Left colon (tissue), 2 donors: ENCODE measurements at regions of chr11 and their contacts with region 1.

Region 1: DNA sequence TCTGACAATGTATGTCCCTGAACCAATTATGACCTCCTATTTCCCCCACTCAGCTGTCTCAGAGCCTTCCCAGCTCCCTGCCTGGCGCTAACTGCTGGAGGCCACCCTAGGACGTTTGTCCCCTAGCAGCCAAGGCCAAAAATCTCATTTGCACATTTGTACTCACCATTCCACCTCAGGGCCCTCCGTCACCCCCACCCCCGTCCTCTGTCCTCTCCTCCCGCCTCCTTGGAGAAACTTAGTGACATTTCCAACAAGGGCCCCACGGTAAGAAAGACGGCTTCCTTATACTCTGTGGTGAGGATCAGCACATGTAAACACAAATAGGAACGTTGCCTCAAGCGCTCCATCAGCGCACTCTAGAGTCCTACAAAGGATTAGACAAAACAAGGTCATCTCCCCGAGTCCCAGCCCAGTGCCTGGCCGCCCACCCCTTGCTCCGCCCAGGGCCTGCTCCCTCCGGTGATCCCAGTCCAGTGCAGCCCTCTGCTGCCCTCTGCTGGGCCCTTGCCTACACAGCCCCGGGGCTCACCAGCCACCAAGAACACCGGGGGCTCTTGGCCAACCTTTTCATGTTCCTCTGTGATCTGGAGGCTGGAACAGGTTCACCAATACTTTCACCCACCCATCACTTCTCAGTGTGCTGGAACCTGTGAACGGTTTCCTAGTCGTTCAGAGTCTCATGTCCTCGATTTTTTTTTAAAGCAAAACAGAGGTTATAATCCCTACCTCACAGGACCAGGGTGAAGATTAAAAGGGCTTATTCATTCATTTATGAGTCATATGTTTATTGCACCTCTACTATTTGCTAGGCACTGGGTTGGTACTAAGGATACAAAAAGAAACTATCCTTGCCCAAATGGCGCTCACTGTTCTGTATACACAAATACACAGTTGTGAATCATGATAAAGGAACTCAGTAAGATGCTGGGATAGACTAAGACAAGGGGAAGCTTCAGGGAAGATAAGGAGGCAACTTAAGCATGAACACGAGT is 15.3 kb upstream of the CTR9 start:
- DNase-seq: peak; percentile 92 to 95
- ATAC-seq: peak; percentile 98

Region 2: DNA sequence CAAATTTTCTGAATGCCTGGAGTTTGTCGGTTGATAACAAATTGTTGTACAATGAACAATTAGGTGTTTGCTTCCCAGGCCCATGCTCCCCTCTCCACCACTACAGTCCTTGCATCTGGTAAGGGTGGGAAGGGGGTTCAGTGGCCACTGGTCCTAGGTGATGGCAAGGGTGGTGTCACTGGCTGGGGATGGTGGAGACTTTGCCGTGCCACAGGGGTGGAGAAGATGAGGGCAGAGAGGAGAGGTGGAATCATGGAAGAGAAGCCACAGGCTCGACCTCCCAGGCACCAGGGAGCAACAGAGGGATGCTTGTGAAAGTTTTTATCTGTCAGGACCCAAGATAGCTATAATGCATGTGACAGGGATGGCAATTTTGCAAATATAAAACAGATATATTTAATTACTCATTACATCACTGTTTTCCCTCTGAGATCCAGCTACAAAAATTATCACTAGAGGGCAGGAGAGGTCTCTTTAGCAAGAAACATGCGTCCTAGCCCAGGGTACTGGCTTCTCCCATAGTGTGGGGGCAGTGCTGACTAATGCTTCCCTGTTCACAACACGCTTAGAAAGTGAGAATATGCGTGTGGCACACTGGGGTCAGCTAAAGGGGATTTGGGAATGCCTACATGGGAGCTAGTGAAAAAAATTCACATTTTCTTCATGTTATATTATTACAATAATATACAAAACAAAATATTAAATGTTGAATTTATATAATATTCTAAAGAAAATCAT is 329.8 kb before region 1 on chr11:
- intact Hi-C with region 1: loop called (anchors 5 to 10 kb)
- DNase-seq: peak; percentile 37 to 70
- ATAC-seq: peak; percentile 91

Region 3: GRCh38 chr11:10413268-10413667 is 322.5 kb before region 1 on chr11:
- intact Hi-C with region 1: loop called (anchors 5 to 10 kb)
- DNase-seq: peak; percentile 39 to 59
- ATAC-seq: peak; percentile 95

Region 4: GRCh38 chr11:10688401-10688800 is 47.4 kb before region 1 on chr11:
- intact Hi-C with region 1: no loop called
- DNase-seq: no peak
- ATAC-seq: no peak

Region 5: DNA sequence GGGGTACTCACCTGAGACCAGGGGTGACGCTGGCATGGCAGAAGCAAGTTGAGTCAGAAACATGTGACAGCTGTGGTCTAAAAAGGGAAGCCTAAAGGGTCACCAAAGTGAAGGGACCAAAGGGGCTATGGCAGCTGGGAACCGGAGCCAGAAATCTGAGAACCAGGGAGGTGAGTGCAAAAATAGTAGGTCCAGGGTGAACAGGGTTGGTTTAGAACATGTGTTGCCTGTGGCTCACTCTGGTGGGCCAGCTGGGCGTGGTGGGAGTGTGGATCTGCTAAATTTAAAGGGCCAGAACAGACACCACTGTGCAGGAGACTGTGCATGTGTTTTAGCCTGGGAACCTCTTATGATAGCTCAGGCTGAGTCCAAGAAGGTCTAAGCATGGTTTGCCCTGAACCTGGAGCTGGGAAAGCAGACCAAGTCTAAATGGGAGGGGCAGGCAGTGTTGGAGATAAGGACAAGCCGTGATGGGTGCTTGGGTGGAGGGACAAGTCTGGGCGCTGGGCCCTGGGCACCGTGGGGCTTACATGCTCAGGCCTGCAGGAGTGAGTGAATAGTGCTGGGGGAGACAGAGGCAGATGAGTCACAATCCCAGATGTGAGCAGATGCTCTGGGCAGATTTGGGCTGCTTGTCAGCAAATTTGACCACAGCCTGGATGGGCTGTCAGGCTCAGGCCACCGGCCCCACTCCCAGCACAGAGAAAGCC is 163.5 kb after region 1 on chr11:
- intact Hi-C with region 1: no loop called
- DNase-seq: peak; percentile 49 to 53
- ATAC-seq: peak; percentile 46